ENCODE measurements at regions of chr22 and their contacts with region 1.

Region 1: DNA sequence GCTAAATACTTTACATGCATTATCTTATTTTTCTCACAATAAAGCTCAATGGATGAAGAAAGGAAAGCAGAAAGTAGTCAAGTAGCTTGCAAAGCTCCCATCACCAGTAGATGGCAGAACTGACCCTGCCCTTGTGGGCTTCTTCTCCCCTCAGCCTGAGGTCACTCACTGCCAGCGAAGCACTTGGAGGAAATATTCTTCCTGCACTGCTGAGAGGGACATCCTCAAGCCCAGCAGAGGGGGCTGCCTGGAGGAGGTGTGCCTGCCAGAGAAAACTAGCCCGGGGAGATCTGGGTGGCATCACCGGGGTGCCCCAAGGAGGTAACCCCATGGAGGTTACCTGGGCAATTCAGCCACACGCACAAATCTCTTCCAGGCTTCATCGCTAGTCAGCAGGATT is 6.6 kb downstream of the APOL4 start:
- DNase-seq: peak; percentile 65
- ATAC-seq: peak; percentile 81
- H3K4me3 Mint-ChIP-seq: no peak overlapping the region
- H3K27ac Mint-ChIP-seq: no peak overlapping the region
- H3K4me1 Mint-ChIP-seq: peaks cover 19% of the 10 kb centered on the region
- H3K27me3 Mint-ChIP-seq: peaks cover 5% of the 10 kb centered on the region

Region 2: GRCh38 chr22:36221799-36222751 is 27.1 kb after region 1 on chr22:
- CTCF ChIA-PET with region 1: interaction called, 9 read pairs
- POLR2A ChIA-PET with region 1: no interaction called
- intact Hi-C with region 1: loop called in 1 of 2 experiments (anchors 1 kb)
- DNase-seq: peak; percentile 75
- ATAC-seq: peak; percentile 74
- H3K4me3 Mint-ChIP-seq: no peak overlapping the region
- H3K27ac Mint-ChIP-seq: no peak overlapping the region
- H3K4me1 Mint-ChIP-seq: peaks cover 5% of the 10 kb centered on the region
- H3K27me3 Mint-ChIP-seq: peaks cover 1% of the 10 kb centered on the region

Region 3: GRCh38 chr22:36277482-36278291 is 82.7 kb after region 1 on chr22:
- CTCF ChIA-PET with region 1: interaction called, 8 read pairs
- POLR2A ChIA-PET with region 1: no interaction called
- intact Hi-C with region 1: loop called (anchors 1 to 5 kb)
- DNase-seq: peak; percentile 88
- ATAC-seq: peak; percentile 82
- H3K4me3 Mint-ChIP-seq: no peak overlapping the region
- H3K27ac Mint-ChIP-seq: peak overlapping the region; percentile 49
- H3K4me1 Mint-ChIP-seq: peaks cover 34% of the 10 kb centered on the region
- H3K27me3 Mint-ChIP-seq: no peaks in the 10 kb centered on the region

Region 4: DNA sequence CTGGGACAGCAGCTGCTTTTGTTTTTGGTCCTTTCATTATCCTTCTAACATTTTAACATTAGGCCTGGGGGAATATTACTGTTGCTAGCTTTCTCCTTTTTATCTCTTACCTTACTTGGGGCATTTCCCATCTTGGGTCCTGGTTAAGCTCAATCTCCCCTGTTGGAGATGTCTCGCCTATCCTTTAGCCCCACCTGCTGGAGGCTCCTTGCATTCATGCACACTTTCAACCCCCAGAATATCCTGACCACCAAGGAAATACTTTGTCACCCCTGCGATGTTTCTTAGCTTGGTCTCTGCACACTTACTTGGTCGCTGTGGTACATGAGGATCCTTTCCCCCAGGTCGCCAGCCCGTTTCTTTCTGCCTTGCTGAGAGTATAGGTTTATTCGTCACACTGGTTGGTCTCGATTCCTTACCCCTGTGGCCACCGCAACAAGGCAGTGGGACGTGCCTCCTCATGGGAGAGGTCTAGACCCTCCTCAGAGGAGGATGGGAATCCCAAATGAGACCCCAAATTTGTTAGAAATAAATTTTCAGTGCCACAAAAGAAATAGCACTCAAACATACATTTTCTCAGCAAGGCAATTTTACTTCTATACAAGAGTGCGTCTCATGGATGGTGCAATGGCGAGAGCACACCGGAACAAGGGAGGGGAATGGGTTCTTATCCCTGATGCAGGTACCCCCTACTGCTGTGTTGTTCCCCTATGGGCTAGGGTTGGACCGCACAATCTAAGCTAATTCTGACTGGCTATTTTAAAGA is 291.8 kb after region 1 on chr22:
- CTCF ChIA-PET with region 1: interaction called, 10 read pairs
- POLR2A ChIA-PET with region 1: no interaction called
- intact Hi-C with region 1: loop called in 1 of 2 experiments (anchors 5 kb)
- DNase-seq: peak; percentile 81
- ATAC-seq: no peak
- H3K4me3 Mint-ChIP-seq: no peak overlapping the region
- H3K27ac Mint-ChIP-seq: no peak overlapping the region
- H3K4me1 Mint-ChIP-seq: peaks cover 7% of the 10 kb centered on the region
- H3K27me3 Mint-ChIP-seq: no peaks in the 10 kb centered on the region